PC-3 (cell line): ENCODE measurements at regions of chr20 and their contacts with region 1.

Region 1: GRCh38 chr20:45934586-45935415 is at the start of gene PCIF1:
- DNase-seq: peak; percentile 99
- ATAC-seq: peak; percentile 81
- H3K4me3 ChIP-seq: peak within 1 kb of the TSS; percentile 91
- H3K27ac ChIP-seq: peak within 1 kb of the TSS; percentile 91
- H3K4me1 ChIP-seq: peaks cover 12% of the 10 kb centered on the region; the same call in 1 of the 2 replicates
- H3K27me3 ChIP-seq: no peaks in the 10 kb centered on the region
- CTCF ChIP-seq: no peak
- total RNA-seq, gene PCIF1: 18.4 and 20.2 TPM in 2 replicates

Region 2: GRCh38 chr20:45415774-45416637 is 518.8 kb before region 1 on chr20 and contains the start of gene PIGT:
- CTCF ChIA-PET with region 1: no interaction called
- POLR2A ChIA-PET with region 1: no interaction called
- intact Hi-C with region 1: loop called (anchors 10 kb)
- DNase-seq: peak; percentile 90
- ATAC-seq: peak; percentile 56
- H3K4me3 ChIP-seq: peak within 1 kb of the TSS; percentile 85
- H3K27ac ChIP-seq: peak within 1 kb of the TSS; percentile 59
- H3K4me1 ChIP-seq: peaks cover 47% of the 10 kb centered on the region
- H3K27me3 ChIP-seq: no peaks in the 10 kb centered on the region
- CTCF ChIP-seq: no peak
- total RNA-seq, gene PIGT: 101 and 129 TPM in 2 replicates

Region 3: GRCh38 chr20:45696605-45697173 is 238.1 kb before region 1 on chr20:
- CTCF ChIA-PET with region 1: no interaction called
- POLR2A ChIA-PET with region 1: interaction called, 13 read pairs
- intact Hi-C with region 1: no loop called
- DNase-seq: peak; percentile 23
- ATAC-seq: no peak
- H3K4me3 ChIP-seq: no peak overlapping the region
- H3K27ac ChIP-seq: no peak overlapping the region
- H3K4me1 ChIP-seq: peaks cover 22% of the 10 kb centered on the region
- H3K27me3 ChIP-seq: no peaks in the 10 kb centered on the region
- CTCF ChIP-seq: no peak

Region 4: GRCh38 chr20:45812157-45813020 is 122.4 kb before region 1 on chr20 and contains the start of gene UBE2C:
- CTCF ChIA-PET with region 1: no interaction called
- POLR2A ChIA-PET with region 1: no interaction called
- intact Hi-C with region 1: loop called (anchors 10 kb)
- DNase-seq: peak; percentile 100
- ATAC-seq: peak; percentile 95
- H3K4me3 ChIP-seq: peak within 1 kb of the TSS; percentile 98
- H3K27ac ChIP-seq: peak within 1 kb of the TSS; percentile 82
- H3K4me1 ChIP-seq: peaks cover 36% of the 10 kb centered on the region
- H3K27me3 ChIP-seq: no peaks in the 10 kb centered on the region
- CTCF ChIP-seq: no peak
- total RNA-seq, gene UBE2C: 251 and 304 TPM in 2 replicates

Region 5: DNA sequence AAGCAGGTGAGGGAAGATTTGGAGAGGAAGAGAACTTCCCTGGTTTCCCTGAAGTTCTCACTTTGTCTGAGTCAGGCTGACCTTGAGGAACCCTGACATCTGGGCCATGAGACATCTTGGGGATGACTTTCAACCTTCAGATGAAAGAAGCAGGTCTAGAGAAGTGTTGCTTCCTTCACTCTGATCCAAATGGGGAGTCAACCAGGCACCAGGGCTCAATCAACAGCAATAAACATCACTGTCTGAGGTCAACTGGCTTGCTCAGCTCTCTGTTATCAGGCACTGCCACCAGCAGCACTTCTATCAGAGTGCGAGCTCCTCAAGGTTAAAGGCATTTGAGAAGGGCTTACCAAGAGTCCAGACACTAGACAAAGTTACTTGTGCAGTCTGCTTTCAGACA is 83.9 kb before region 1 on chr20:
- CTCF ChIA-PET with region 1: no interaction called
- POLR2A ChIA-PET with region 1: interaction called, 13 read pairs
- intact Hi-C with region 1: no loop called
- DNase-seq: no peak
- ATAC-seq: no peak
- H3K4me3 ChIP-seq: no peak overlapping the region
- H3K27ac ChIP-seq: no peak overlapping the region
- H3K4me1 ChIP-seq: peaks cover 3% of the 10 kb centered on the region
- H3K27me3 ChIP-seq: no peaks in the 10 kb centered on the region
- CTCF ChIP-seq: no peak

Region 6: GRCh38 chr20:45905505-45906079 is 29.2 kb before region 1 on chr20:
- CTCF ChIA-PET with region 1: no interaction called
- POLR2A ChIA-PET with region 1: interaction called, 24 read pairs
- intact Hi-C with region 1: no loop called
- DNase-seq: peak; percentile 99
- ATAC-seq: peak; percentile 93
- H3K4me3 ChIP-seq: no peak overlapping the region
- H3K27ac ChIP-seq: peak overlapping the region; percentile 73
- H3K4me1 ChIP-seq: peaks cover 17% of the 10 kb centered on the region
- H3K27me3 ChIP-seq: no peaks in the 10 kb centered on the region
- CTCF ChIP-seq: no peak

Region 7: GRCh38 chr20:45963059-45964005 is 28.5 kb after region 1 on chr20:
- CTCF ChIA-PET with region 1: no interaction called
- POLR2A ChIA-PET with region 1: interaction called, 28 read pairs
- intact Hi-C with region 1: no loop called
- DNase-seq: peak; percentile 76
- ATAC-seq: peak; percentile 76
- H3K4me3 ChIP-seq: no peak overlapping the region
- H3K27ac ChIP-seq: no peak overlapping the region
- H3K4me1 ChIP-seq: no peaks in the 10 kb centered on the region
- H3K27me3 ChIP-seq: no peaks in the 10 kb centered on the region
- CTCF ChIP-seq: peak; percentile 54